PC-9 (cell line): ENCODE measurements at regions of chr1 and their contacts with region 1.

Region 1: DNA sequence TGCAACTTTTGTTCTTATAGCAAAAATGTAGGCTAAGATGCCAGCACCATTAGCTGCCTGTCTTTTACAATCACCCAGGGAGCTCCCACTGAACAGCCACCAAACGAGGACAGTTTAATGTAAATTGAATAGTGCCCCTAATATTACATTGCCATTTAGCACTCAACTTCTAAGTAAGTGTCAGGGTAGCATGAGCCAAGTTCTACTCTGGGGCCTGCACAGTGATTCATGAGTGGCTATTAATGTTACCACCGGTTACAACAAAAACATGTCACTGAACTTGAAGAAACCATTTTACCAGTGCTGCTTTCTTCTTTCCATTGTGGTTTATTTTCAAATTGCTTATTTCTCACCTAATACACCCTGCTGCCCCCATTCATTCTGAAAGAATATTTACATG is 295.6 kb upstream of the RRP15 start:
- DNase-seq: no peak
- H3K4me3 ChIP-seq: no peak overlapping the region
- H3K27ac ChIP-seq: no peak overlapping the region
- H3K4me1 ChIP-seq: no peaks in the 10 kb centered on the region
- H3K27me3 ChIP-seq: no peaks in the 10 kb centered on the region
- CTCF ChIP-seq: no peak

Region 2: GRCh38 chr1:218079347-218079746 is 89.8 kb after region 1 on chr1:
- CTCF ChIA-PET with region 1: no interaction called
- POLR2A ChIA-PET with region 1: interaction called, 14 read pairs
- intact Hi-C with region 1: no loop called
- DNase-seq: no peak
- H3K4me3 ChIP-seq: no peak overlapping the region
- H3K27ac ChIP-seq: no peak overlapping the region
- H3K4me1 ChIP-seq: no peaks in the 10 kb centered on the region
- H3K27me3 ChIP-seq: no peaks in the 10 kb centered on the region
- CTCF ChIP-seq: no peak

Region 3: DNA sequence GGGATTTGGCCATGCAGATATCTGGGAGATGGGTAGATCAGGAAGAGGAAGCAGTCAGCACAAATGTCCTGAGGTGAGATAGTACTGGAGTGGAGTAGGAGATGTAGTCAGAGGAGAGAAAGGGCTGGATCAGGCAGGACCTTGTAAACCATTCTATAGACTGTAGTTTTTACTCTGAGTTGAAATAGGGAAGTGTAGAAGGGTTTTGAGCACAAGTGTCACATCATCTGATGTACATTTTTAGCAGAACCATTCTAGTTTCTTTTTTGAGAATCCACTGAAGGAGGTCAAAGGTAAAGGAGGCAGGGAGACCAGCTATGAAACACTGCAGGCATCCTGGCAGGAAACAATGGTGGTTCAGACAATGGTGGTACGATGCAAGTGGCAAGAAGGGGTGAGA is 100.9 kb after region 1 on chr1:
- CTCF ChIA-PET with region 1: no interaction called
- POLR2A ChIA-PET with region 1: no interaction called
- intact Hi-C with region 1: no loop called
- DNase-seq: no peak
- H3K4me3 ChIP-seq: no peak overlapping the region
- H3K27ac ChIP-seq: no peak overlapping the region
- H3K4me1 ChIP-seq: no peaks in the 10 kb centered on the region
- H3K27me3 ChIP-seq: no peaks in the 10 kb centered on the region
- CTCF ChIP-seq: no peak